ENCODE measurements at regions of chr13 and their contacts with region 1.

Region 1: DNA sequence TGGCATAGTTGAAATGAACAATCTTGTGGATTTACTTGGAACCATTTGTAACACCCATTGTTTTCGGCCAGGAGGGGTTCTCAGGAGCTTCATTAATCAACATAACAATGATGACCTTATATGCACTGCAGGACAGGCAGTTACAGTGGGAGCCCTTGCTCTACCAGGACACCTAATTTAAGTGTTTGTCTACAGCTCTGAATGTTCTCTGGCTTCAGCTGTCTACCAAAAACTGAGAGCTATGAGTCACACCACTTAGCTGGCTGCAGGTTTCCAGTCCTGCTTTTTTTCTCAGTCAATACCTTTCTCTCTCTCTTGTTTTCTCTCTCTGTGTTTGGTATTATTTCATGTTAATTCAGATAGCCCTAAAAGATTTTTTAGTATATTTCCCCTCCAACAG is 105.4 kb upstream of the MBNL2 start:
- DNase-seq: no peak
- H3K4me3 ChIP-seq: no peak overlapping the region
- H3K27ac ChIP-seq: no peak overlapping the region
- H3K4me1 ChIP-seq: no peaks in the 10 kb centered on the region
- H3K27me3 ChIP-seq: no peaks in the 10 kb centered on the region
- CTCF ChIP-seq: no peak

Region 2: GRCh38 chr13:96431044-96431581 is 685.6 kb before region 1 on chr13:
- CTCF ChIA-PET with region 1: no interaction called
- POLR2A ChIA-PET with region 1: no interaction called
- intact Hi-C with region 1: no loop called
- DNase-seq: no peak
- H3K4me3 ChIP-seq: no peak overlapping the region
- H3K27ac ChIP-seq: no peak overlapping the region
- H3K4me1 ChIP-seq: no peaks in the 10 kb centered on the region
- H3K27me3 ChIP-seq: no peaks in the 10 kb centered on the region
- CTCF ChIP-seq: no peak

Region 3: DNA sequence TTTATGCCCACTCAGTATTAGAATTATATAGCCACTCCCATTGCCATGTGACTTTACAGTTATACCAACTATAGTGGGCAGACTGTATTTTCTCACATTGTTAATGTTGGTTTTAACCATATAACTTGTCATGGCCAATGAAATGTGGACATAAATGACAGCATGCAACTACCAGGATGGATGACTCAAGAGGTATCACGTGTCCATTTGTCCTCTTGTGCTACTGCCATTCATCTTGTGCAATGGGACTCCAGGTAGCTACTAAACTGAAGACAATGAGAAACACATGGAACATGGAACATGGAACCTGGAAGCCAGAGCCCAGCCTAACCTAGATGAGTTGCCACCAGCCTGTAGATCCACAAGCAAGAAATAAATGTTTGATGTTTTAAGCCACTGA is 594.0 kb after region 1 on chr13:
- CTCF ChIA-PET with region 1: no interaction called
- POLR2A ChIA-PET with region 1: no interaction called
- intact Hi-C with region 1: loop called (anchors 5 kb)
- DNase-seq: no peak
- H3K4me3 ChIP-seq: no peak overlapping the region
- H3K27ac ChIP-seq: no peak overlapping the region
- H3K4me1 ChIP-seq: no peaks in the 10 kb centered on the region
- H3K27me3 ChIP-seq: no peaks in the 10 kb centered on the region
- CTCF ChIP-seq: no peak